WTC11 (cell line): ENCODE measurements at regions of chr21 and their contacts with region 1.

Region 1: DNA sequence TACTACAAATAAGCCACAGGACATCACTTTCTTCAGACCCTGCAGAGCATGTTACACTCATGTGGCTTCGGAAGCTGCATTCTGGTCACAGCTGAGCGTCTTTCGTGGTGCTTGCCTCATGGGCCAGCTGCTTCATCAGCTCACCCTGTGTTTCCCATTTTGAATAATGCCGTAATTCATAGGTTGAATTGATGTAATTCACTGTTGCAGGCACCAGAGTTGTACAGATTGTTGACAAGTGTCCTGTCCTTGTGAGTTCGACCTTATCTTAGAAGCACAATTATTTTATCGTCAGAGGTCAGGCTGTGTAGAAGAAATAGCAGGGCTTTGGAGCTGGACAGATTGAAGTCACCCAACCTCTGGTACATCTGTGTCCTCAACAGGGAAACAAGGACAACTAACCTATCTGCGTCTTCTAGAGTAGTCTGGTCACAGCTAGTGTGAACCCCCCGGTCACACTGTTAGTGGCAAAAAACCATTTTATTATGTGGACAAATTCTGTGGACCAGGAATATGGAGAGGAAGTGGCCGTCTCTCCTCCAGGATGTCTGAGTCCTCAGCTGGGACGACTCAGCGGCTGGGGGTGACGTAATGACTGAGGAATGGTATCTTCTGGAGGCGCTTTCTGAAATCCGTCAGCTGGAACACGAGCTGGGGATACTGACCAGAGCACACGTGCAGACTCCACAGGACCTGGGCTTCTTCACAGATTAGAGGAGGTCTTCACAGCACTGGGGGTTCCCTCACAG is 17.8 kb downstream of the PKNOX1 start:
- DNase-seq: no peak
- ATAC-seq: peak; percentile 34
- H3K4me3 Mint-ChIP-seq: no peak overlapping the region
- H3K27ac Mint-ChIP-seq: peak overlapping the region; percentile 92
- H3K4me1 Mint-ChIP-seq: peaks cover 41% of the 10 kb centered on the region
- H3K27me3 Mint-ChIP-seq: no peaks in the 10 kb centered on the region
- CTCF ChIP-seq: no peak

Region 2: DNA sequence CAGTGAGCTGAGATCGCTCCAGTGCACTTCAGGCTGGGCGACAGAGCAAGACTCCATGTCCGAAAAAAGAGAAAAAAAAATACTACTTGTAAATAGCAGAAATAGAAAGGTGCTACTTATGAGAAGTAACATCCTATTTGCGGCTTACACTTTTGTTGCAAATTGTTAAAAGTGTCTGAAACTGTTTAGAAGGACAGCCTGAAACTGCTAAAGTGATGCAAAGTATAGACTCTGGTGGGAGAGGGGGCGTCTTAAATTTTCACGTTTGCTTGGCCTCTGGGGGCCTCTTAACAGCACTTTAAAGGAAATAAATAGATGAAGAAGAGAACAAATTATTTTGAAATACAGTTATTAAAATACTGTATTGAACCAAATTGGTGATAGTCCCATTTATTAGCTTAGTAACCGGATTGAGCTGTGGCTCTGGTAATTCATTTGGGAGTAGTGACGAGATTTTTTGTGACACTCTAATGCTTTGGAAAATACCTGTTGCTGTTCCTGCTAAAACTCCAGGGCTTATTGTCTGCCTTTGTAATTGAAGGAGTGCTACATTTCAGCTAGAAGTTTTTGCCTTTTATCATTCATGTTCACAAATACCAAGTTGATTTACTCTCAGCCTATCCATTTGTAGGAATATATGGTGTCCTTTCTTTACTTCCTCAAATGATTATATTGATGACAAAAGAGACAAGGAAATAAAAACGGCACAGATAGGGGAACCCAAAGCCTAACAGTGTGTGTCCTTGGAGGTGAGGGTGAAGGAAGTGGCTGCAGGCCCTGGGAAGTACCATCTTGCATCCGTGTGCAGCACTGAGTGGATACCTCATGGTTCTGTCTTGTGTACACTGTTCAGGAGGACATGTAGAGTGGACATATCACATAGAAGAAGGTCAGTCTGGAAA is 11.6 kb before region 1 on chr21:
- CTCF ChIA-PET with region 1: interaction called, 4 read pairs
- POLR2A ChIA-PET with region 1: interaction called, 10 read pairs
- DNase-seq: no peak
- ATAC-seq: peak; percentile 12; the same call in 1 of the 2 replicates
- H3K4me3 Mint-ChIP-seq: no peak overlapping the region; the same call in none of the 2 replicates
- H3K27ac Mint-ChIP-seq: peak overlapping the region; percentile 92
- H3K4me1 Mint-ChIP-seq: peaks cover 70% of the 10 kb centered on the region
- H3K27me3 Mint-ChIP-seq: no peaks in the 10 kb centered on the region
- CTCF ChIP-seq: no peak